Activated CD4-positive, alpha-beta T cell treated with anti-CD3 and anti-CD28 coated beads for 36 hours (primary cell): ENCODE measurements at regions of chr3 and their contacts with region 1.

Region 1: GRCh38 chr3:195850857-195851543 is 39.3 kb upstream of the MUC4 start:
- DNase-seq: peak; percentile 94
- ATAC-seq: peak; percentile 99
- H3K4me3 Mint-ChIP-seq: peak overlapping the region; percentile 10
- H3K27ac Mint-ChIP-seq: no peak overlapping the region
- H3K4me1 Mint-ChIP-seq: peaks cover 9% of the 10 kb centered on the region
- H3K27me3 Mint-ChIP-seq: peaks cover 2% of the 10 kb centered on the region

Region 2: GRCh38 chr3:195558602-195559001 is 292.4 kb before region 1 on chr3:
- CTCF ChIA-PET with region 1: interaction called, 4 read pairs
- POLR2A ChIA-PET with region 1: no interaction called
- intact Hi-C with region 1: loop called in 1 of 2 experiments (anchors 2 kb)
- DNase-seq: peak; percentile 39
- ATAC-seq: peak; percentile 65
- H3K4me3 Mint-ChIP-seq: no peak overlapping the region
- H3K27ac Mint-ChIP-seq: no peak overlapping the region
- H3K4me1 Mint-ChIP-seq: peaks cover 37% of the 10 kb centered on the region
- H3K27me3 Mint-ChIP-seq: no peaks in the 10 kb centered on the region

Region 3: DNA sequence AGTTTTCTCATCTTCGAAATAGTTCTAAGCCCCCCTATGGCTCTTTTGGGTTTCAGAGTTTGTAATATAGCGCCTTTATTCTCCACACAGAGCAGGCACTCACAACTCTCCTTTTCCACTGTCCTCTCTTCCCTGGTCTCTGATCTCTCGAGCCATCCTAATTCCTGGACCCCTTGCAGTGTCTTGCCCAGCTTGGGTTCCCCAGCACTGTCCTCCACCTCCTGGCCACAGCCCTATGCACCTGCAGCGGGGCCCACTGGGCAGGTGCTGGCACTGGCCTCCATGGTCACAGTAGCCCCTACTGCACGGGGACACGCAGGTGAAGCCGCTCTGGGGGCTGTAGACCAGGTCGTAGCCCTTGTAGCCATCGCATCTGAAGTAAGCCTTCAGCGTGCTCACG is 102.3 kb before region 1 on chr3:
- CTCF ChIA-PET with region 1: interaction called, 8 read pairs
- POLR2A ChIA-PET with region 1: no interaction called
- intact Hi-C with region 1: loop called in 1 of 2 experiments (anchors 2 kb)
- DNase-seq: no peak
- ATAC-seq: no peak
- H3K4me3 Mint-ChIP-seq: no peak overlapping the region
- H3K27ac Mint-ChIP-seq: no peak overlapping the region
- H3K4me1 Mint-ChIP-seq: peaks cover 9% of the 10 kb centered on the region
- H3K27me3 Mint-ChIP-seq: peaks cover 3% of the 10 kb centered on the region

Region 4: GRCh38 chr3:195999896-196000295 is 148.9 kb after region 1 on chr3:
- CTCF ChIA-PET with region 1: interaction called, 3 read pairs
- POLR2A ChIA-PET with region 1: no interaction called
- intact Hi-C with region 1: loop called in 1 of 2 experiments (anchors 5 kb)
- DNase-seq: no peak
- ATAC-seq: no peak
- H3K4me3 Mint-ChIP-seq: no peak overlapping the region
- H3K27ac Mint-ChIP-seq: no peak overlapping the region
- H3K4me1 Mint-ChIP-seq: no peaks in the 10 kb centered on the region
- H3K27me3 Mint-ChIP-seq: peaks cover 15% of the 10 kb centered on the region

Region 5: DNA sequence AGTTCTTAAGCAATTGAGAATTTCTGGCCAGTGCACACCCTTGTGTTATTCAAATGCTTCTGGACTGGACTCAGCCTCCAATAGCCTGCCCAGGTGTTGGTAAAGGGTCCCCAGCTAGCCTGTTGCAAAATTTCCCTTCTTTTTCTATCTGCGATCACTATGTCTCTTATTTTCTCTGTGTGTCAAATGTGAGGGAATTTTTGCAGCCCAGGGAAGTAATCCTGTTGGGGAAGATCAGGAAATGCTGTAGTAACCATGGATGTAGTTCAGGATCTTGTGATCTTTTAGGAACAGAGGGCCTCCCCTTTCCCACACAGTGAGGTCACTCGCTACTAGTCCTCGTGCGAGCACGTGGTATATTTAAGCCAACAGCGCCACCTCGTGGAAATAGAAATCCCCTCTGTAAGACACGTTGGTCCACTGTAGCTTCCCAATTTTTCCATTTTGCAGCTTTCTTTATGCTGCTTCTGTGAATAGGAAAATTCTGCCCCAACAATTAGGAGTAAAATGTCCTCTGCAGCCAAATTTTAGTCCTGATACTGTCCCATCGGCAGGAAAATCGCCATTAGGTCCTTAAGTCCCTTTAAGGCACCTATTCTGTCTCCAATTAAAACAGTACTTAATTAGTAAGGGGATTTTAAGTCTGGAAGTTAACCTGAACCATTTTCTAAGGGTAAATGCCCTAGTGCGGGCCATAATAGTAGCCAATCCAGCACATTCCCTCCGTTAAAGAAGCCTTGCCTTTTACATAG is 668.1 kb after region 1 on chr3:
- CTCF ChIA-PET with region 1: no interaction called
- POLR2A ChIA-PET with region 1: no interaction called
- intact Hi-C with region 1: loop called in 1 of 2 experiments (anchors 2 kb)
- DNase-seq: peak; percentile 84
- ATAC-seq: peak; percentile 73
- H3K4me3 Mint-ChIP-seq: no peak overlapping the region
- H3K27ac Mint-ChIP-seq: no peak overlapping the region
- H3K4me1 Mint-ChIP-seq: no peaks in the 10 kb centered on the region
- H3K27me3 Mint-ChIP-seq: peaks cover 2% of the 10 kb centered on the region